PC-3 (cell line): ENCODE measurements at regions of chr4 and their contacts with region 1.

Region 1: DNA sequence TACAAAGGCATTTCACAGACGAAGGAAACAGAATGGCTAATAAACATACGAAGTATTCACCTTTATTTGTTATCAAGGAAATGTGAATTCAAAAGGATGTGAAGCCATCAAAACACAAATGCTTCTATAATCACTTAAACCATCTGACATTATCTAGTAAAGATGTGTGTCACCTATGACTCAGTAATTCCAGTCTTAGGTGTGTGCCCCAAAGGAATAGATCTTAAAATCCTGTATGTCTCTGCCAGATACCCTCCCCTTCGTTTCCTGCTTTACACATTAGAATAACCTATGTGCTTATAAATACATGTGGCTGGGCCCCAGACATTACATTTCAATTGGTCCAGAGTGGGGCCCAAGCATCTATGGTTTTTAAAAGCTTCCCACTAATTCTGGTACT is 41.7 kb upstream of the CEP135 start:
- DNase-seq: peak; percentile 97
- ATAC-seq: peak; percentile 97
- H3K4me3 ChIP-seq: no peak overlapping the region
- H3K27ac ChIP-seq: peak overlapping the region; percentile 25
- H3K4me1 ChIP-seq: peaks cover 17% of the 10 kb centered on the region
- H3K27me3 ChIP-seq: no peaks in the 10 kb centered on the region
- CTCF ChIP-seq: no peak

Region 2: GRCh38 chr4:54625125-54625790 is 1281.7 kb before region 1 on chr4:
- CTCF ChIA-PET with region 1: no interaction called
- POLR2A ChIA-PET with region 1: no interaction called
- intact Hi-C with region 1: no loop called
- DNase-seq: no peak
- ATAC-seq: no peak
- H3K4me3 ChIP-seq: no peak overlapping the region
- H3K27ac ChIP-seq: no peak overlapping the region
- H3K4me1 ChIP-seq: no peaks in the 10 kb centered on the region
- H3K27me3 ChIP-seq: peaks cover 63% of the 10 kb centered on the region
- CTCF ChIP-seq: no peak

Region 3: GRCh38 chr4:55921093-55921492 is 14.1 kb after region 1 on chr4:
- CTCF ChIA-PET with region 1: no interaction called
- POLR2A ChIA-PET with region 1: no interaction called
- intact Hi-C with region 1: loop called (anchors 1 kb)
- DNase-seq: peak; percentile 76
- ATAC-seq: peak; percentile 95
- H3K4me3 ChIP-seq: no peak overlapping the region
- H3K27ac ChIP-seq: peak overlapping the region; percentile 23
- H3K4me1 ChIP-seq: peaks cover 17% of the 10 kb centered on the region
- H3K27me3 ChIP-seq: no peaks in the 10 kb centered on the region
- CTCF ChIP-seq: no peak

Region 4: DNA sequence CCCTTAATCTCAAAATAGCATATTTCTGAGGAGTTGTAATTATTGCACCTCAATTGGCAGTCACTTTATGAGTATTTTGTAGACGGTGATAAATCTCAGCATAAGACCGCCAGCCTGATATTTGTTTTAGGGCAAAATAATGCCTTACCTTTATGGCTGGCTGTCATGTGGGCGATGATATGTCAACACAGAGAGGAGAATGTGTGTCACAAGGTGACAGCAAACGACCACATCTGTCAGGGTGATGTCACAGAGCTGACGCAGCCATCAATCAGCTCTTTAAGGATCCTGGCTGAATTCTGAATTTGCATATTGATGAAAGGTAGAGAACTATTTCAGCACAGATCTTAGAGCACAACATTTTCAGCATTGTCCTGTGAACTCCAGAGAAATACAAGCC is 251.5 kb after region 1 on chr4:
- CTCF ChIA-PET with region 1: no interaction called
- POLR2A ChIA-PET with region 1: no interaction called
- intact Hi-C with region 1: no loop called
- DNase-seq: no peak
- ATAC-seq: no peak
- H3K4me3 ChIP-seq: no peak overlapping the region
- H3K27ac ChIP-seq: no peak overlapping the region
- H3K4me1 ChIP-seq: no peaks in the 10 kb centered on the region
- H3K27me3 ChIP-seq: 0 out of 2 replicates have a peak, but pooled peaks cover 4% of the 10 kb centered on the region
- CTCF ChIP-seq: no peak